ENCODE measurements at regions of chr5 and their contacts with region 1.

Region 1: DNA sequence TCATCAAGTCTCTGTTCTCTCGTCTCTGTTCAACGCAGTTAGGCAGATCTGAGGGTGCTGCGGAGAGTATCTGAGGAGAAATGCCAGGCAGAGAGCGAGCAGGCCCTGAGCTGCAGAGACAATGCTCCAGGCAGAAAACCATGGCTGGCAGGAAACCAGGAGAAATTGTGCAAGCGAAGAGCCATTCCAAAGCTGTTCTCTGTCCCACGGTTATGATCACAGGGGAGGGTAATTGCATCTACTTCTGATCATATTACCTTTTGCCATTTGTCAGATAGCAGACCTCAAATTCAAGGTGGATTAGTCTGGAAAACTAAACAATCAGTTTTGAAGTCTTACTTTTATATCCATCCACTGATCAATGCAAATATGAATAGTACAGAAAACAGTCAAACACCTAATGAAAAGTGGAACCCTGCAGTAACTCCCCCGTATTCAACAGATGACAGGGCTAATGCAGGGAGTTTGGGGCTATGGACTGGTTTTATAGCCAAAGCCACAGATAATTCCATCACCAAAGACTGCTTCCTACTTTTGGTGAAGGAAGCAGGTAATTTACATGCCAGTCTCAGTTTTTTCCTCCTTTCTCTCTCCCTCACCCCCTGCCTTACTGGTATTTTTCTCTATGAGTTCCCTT is 228.0 kb downstream of the DCP2 start:
- DNase-seq: peak; percentile 96
- H3K4me3 Mint-ChIP-seq: peak overlapping the region; percentile 59
- H3K27ac Mint-ChIP-seq: no peak overlapping the region
- H3K4me1 Mint-ChIP-seq: peaks cover 45% of the 10 kb centered on the region
- H3K27me3 Mint-ChIP-seq: no peaks in the 10 kb centered on the region
- CTCF ChIP-seq: no peak

Region 2: DNA sequence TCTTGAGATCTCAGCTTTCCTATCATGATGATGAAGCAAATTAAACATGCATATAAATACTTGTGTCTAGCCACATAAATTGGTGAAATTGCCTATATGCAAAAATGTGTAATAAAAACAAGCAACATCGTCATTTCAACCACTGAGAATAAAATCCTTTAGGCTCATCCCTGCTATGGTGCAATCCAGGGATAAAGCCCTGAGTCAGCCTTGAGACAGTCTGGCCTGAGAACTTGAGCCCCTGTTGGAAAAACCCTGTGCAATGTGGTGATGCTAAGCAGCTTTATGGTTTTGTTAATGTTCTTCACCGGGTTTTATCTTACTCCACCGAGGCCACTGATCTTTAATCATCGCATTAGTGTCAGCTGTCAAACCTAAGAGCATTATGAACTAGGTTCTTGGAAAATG is 57.5 kb before region 1 on chr5:
- CTCF ChIA-PET with region 1: interaction called, 3 read pairs
- POLR2A ChIA-PET with region 1: interaction called, 48 read pairs
- intact Hi-C with region 1: no loop called
- DNase-seq: peak; percentile 90
- H3K4me3 Mint-ChIP-seq: peak overlapping the region; percentile 2
- H3K27ac Mint-ChIP-seq: peak overlapping the region; percentile 49
- H3K4me1 Mint-ChIP-seq: peaks cover 26% of the 10 kb centered on the region
- H3K27me3 Mint-ChIP-seq: no peaks in the 10 kb centered on the region
- CTCF ChIP-seq: no peak

Region 3: GRCh38 chr5:113232667-113233066 is 28.0 kb after region 1 on chr5:
- CTCF ChIA-PET with region 1: interaction called, 5 read pairs
- POLR2A ChIA-PET with region 1: interaction called, 36 read pairs
- intact Hi-C with region 1: no loop called
- DNase-seq: peak; percentile 60
- H3K4me3 Mint-ChIP-seq: no peak overlapping the region
- H3K27ac Mint-ChIP-seq: no peak overlapping the region
- H3K4me1 Mint-ChIP-seq: peaks cover 43% of the 10 kb centered on the region
- H3K27me3 Mint-ChIP-seq: no peaks in the 10 kb centered on the region
- CTCF ChIP-seq: no peak

Region 4: GRCh38 chr5:113264042-113264441 is 59.4 kb after region 1 on chr5:
- CTCF ChIA-PET with region 1: interaction called, 4 read pairs
- POLR2A ChIA-PET with region 1: interaction called, 16 read pairs
- intact Hi-C with region 1: no loop called
- DNase-seq: peak; percentile 86
- H3K4me3 Mint-ChIP-seq: no peak overlapping the region
- H3K27ac Mint-ChIP-seq: peak overlapping the region; percentile 63
- H3K4me1 Mint-ChIP-seq: peaks cover 42% of the 10 kb centered on the region
- H3K27me3 Mint-ChIP-seq: no peaks in the 10 kb centered on the region
- CTCF ChIP-seq: no peak

Region 5: DNA sequence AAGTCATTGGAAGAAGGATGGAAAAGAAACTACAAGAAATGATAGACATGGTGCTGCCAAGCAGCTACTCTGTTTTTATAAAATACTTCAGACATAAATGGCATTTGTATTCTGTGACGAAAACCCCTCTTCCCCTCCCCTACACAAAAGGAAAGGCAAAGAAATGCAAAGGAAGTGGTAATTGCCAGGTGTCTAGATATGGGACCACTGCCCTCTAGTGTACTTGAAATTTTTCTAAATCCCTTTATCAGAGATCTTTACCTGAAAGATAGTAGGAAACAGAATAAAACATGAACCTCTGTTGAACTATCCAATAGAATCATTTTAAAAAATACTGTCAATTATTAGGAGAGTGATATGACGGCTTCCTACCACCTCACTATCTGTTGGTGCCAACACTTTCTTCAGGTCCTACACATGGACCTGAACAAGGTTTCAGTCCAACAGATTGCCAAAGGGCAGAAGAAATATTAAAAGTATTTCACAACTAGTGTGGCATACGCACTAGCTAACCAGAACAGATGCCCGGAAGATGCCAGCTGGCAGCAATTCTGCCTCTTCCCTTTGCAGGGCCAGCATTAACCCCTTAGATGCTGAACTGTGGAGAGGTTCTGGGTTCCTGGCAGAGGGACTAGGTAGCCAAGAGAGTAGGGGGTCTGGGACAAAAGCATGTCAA is 126.0 kb after region 1 on chr5:
- CTCF ChIA-PET with region 1: interaction called, 10 read pairs
- POLR2A ChIA-PET with region 1: interaction called, 11 read pairs
- intact Hi-C with region 1: no loop called
- DNase-seq: peak; percentile 93
- H3K4me3 Mint-ChIP-seq: peak overlapping the region; percentile 44
- H3K27ac Mint-ChIP-seq: peak overlapping the region; percentile 17
- H3K4me1 Mint-ChIP-seq: peaks cover 20% of the 10 kb centered on the region
- H3K27me3 Mint-ChIP-seq: no peaks in the 10 kb centered on the region
- CTCF ChIP-seq: peak; percentile 63